Stomach (tissue), 19 donors: ENCODE measurements at regions of chr3 and their contacts with region 1.

Region 1: DNA sequence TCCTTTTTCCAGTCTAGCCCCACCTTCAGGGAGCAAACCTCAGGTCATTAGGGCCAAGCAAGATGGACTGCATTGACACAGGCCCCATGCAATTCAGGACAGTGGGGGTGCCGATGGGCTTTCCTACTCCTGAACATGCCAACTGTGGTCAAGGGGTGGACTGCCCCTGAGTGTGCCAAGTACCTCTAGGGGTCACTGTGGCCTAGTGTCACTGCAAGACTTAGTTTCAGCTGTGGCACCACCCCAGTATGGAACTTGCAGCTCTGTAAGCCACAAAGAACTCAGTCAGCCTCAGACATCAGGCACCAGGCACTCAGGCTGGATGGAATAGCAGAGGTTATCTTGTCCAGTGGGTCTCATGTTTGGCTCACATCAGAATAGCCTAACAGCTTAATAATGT is 32.3 kb downstream of the EXOG start:
- DNase-seq: no peak
- H3K4me3 ChIP-seq: no peak overlapping the region
- H3K27ac ChIP-seq: no peak overlapping the region
- H3K4me1 ChIP-seq: no peaks in the 10 kb centered on the region
- H3K27me3 ChIP-seq: no peaks in the 10 kb centered on the region
- CTCF ChIP-seq: no peak
- EP300 ChIP-seq: no peak
- POLR2A ChIP-seq: no peak

Region 2: DNA sequence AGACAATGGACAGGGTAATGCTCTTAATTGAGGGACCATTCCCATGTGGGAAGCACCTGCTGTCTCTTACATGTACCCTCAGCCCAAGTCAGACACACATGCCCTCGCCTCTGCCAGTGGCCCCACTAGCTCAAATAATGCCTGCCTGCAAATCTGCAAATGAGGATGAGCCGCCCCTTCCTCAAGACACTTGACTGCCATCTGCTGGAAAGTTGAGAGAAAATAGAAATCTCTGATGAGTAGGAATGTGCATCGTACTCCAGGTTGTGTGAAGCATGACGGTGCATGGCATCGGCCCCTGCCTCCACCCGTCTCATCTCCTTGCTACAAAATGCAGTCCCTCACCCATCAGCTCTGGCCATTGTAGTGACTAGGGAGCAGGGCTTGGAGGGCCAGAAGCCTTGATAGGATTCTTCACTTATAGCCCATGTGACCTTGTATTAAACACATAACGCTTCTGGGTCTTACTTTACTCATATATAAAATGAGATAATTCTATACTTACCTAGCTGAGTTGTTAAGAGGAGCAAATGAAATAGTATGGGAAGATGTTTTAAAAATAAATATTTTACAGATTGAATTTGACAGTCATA is 127.3 kb after region 1 on chr3:
- intact Hi-C with region 1: loop called (anchors 5 kb)
- DNase-seq: peak in 1 of 2 donors; percentile 73
- H3K4me3 ChIP-seq: no peak overlapping the region
- H3K27ac ChIP-seq: no peak overlapping the region
- H3K4me1 ChIP-seq: peaks cover 0 to 7% (median 5%) of the 10 kb centered on the region in 4 donors
- H3K27me3 ChIP-seq: peaks cover 4 to 85% (median 48%) of the 10 kb centered on the region in 3 donors
- CTCF ChIP-seq: peak in 1 of 7 experiments; percentile 7
- EP300 ChIP-seq: no peak
- POLR2A ChIP-seq: no peak

Region 3: DNA sequence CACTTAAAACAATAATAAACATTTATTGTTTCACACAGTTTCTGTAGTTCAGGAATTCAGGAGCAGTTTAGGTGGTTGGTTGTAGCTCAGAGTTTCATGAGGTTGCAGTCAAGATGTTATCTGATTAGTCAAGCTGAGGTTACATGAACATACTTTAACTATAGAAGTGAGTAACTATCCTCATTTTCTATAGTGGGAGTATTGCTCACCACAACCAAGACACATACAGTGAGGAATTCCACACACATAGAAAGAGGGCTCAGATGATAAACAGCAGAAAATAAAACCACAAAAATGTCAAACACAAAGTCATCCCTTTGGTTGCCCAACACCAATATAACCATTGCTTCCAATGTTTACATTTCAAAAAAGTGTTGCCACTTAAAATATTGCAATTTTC is 509.7 kb after region 1 on chr3:
- intact Hi-C with region 1: no loop called
- DNase-seq: no peak
- H3K4me3 ChIP-seq: no peak overlapping the region
- H3K27ac ChIP-seq: no peak overlapping the region
- H3K4me1 ChIP-seq: no peaks in the 10 kb centered on the region
- H3K27me3 ChIP-seq: no peaks in the 10 kb centered on the region
- CTCF ChIP-seq: no peak
- EP300 ChIP-seq: no peak
- POLR2A ChIP-seq: no peak